ENCODE measurements at regions of chr16 and their contacts with region 1.

Region 1: GRCh38 chr16:84617791-84618580 is at the start of gene COTL1:
- DNase-seq: peak; percentile 99
- ATAC-seq: peak; percentile 88
- H3K4me3 ChIP-seq: peak within 1 kb of the TSS; percentile 57
- H3K27ac ChIP-seq: peak within 1 kb of the TSS; percentile 69
- H3K4me1 ChIP-seq: peaks cover 19 to 31% of the 10 kb centered on the region in 2 experiments; a peak in 4 of 5 replicates
- H3K27me3 ChIP-seq: no peaks in the 10 kb centered on the region
- CTCF ChIP-seq: no peak; a peak in 1 of 6 replicates
- EP300 ChIP-seq: peak; percentile 10; the same call in 1 of the 2 replicates
- POLR2A ChIP-seq: no peak
- RAD21 ChIP-seq: no peak
- polyA plus RNA-seq, gene COTL1: 27.7 to 33.4 TPM

Region 2: DNA sequence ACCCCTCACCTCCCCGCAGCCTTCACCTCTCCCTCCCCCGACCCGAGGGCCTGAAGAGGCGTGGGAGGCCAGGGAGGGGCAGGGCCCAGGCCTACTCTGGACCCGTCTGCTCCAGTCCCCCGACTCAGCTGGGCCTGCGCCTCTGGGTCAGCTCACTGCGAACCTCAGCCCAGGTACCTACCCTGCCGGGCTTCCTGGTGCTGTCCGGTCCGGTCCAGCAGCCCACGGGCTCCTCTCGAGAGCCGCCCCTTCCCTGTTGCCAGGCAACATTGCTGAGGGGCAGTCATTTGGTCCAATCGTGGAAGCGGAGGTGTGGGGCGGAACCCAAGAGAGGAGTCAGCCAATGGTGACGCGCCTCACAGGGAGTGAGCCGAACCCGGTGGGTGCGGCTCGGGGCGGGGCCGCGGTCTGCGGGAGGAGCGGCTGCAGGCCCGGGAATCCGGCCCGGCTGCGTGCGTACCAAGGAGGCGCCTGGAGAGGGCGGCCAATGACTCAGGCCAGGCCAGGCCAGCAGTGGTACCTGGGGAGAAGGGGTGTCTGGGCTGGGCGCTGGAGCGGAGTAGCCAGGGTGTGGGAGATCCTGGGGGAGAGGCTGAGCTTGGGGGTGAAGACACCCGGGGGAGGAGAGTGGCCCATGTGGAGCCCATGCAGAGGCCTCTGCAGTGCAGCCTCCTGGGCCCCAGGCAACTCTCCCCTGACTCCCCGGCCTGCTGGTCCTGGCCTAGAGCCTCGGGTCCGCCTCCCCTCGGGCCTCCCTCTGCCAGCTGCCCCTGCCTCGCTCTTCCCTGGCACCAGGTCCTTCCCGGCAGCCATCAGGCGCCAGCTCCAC is 113.4 kb before region 1 on chr16 and contains the start of gene MEAK7:
- CTCF ChIA-PET with region 1: interaction called, 120 read pairs
- POLR2A ChIA-PET with region 1: interaction called, 4 read pairs
- in situ Hi-C with region 1: no loop called
- intact Hi-C with region 1: no loop called
- DNase-seq: peak; percentile 100
- ATAC-seq: peak; percentile 99
- H3K4me3 ChIP-seq: peak within 1 kb of the TSS; percentile 61
- H3K27ac ChIP-seq: peak within 1 kb of the TSS; percentile 63
- H3K4me1 ChIP-seq: peaks cover 15 to 37% of the 10 kb centered on the region in 2 experiments
- H3K27me3 ChIP-seq: peaks cover 0 to 5% of the 10 kb centered on the region in 2 experiments; a peak in 1 of 5 replicates
- CTCF ChIP-seq: peak; percentile 9 to 44 (median 37); a peak in 4 of 6 replicates
- EP300 ChIP-seq: no peak
- POLR2A ChIP-seq: peak; percentile 90
- RAD21 ChIP-seq: no peak
- polyA plus RNA-seq, gene MEAK7: 1.4 to 1.8 TPM

Region 3: DNA sequence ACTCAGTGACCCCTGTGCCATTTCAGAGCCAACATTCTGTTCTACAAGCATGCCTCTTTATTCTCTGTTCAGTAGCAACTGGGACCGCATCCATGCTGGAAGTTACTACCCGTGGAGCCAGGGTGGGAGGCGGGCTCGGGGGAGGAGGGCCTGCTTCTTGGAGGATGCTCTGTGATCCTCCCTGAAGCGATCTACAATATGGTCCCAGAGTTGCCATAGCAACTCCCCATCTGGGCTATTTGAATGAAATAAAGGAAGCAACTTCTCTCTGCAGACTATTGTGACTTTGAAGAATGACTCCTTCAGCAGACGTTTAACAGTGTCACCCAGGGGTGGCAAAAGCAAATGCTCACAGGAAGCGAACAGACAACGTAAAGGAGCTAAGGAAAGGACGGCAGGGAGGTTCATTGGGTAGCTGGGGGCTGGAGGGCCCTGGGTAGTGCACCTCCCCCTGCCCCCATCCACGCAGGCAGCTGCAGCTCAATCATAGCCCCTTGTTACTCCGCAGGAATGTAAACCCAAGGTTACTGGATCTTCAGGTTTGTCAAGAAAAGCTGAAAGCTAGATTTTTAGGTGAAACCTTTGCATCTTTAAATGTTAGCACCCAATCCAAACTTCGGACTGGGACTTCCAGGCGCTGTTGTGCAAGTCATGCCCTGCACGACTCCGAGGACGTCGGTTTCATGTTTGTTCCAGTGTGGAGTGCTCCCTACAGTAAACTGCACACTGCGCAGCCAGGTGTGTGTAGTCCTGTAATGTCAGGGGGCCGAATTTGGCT is 62.4 kb before region 1 on chr16:
- CTCF ChIA-PET with region 1: no interaction called
- POLR2A ChIA-PET with region 1: no interaction called
- in situ Hi-C with region 1: no loop called
- intact Hi-C with region 1: loop called (anchors 5 kb)
- DNase-seq: no peak
- ATAC-seq: peak; percentile 22; the same call in 1 of the 3 replicates
- H3K4me3 ChIP-seq: no peak overlapping the region
- H3K27ac ChIP-seq: no peak overlapping the region
- H3K4me1 ChIP-seq: peaks cover 0 to 4% of the 10 kb centered on the region in 2 experiments; a peak in 3 of 5 replicates
- H3K27me3 ChIP-seq: peaks cover 28 to 36% of the 10 kb centered on the region in 2 experiments
- CTCF ChIP-seq: 0 out of 6 replicates have a peak, but pooled peaks of 2 of the 3 experiments have one; percentile 3 to 11
- EP300 ChIP-seq: no peak
- POLR2A ChIP-seq: no peak
- RAD21 ChIP-seq: no peak

Region 4: DNA sequence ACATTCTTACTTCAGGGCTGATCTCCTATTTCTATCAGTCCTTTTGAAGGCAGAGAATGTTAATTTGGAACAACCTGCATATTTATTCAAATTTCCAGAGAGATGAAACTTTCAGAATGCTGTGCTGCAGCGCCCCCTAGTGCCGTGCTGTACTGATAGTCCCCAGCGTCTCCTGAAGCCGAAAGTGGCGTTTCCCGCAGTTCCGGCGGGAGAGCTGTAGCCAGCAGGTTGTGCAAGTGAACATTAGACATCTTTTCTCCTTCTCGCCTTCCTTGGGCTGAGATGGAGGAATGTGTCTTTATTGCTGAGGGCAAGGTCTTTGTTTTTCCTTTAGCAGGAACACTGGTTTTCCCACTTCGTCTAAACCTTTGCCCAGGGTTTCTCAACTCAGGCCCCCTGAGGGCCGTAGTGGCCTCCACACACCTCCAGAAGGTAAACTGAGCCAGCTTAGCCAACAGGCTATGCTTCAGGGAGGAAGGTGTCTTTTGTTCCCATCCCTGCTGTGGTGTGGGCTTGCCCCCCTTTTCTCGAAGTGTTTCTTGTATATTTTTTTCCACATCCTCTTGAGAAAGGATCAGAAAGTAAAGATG is 108.2 kb after region 1 on chr16:
- CTCF ChIA-PET with region 1: interaction called, 58 read pairs
- POLR2A ChIA-PET with region 1: interaction called, 4 read pairs
- in situ Hi-C with region 1: loop called (anchors 5 kb)
- intact Hi-C with region 1: loop called (anchors 1 kb)
- DNase-seq: peak; percentile 67 to 94 (median 72)
- ATAC-seq: peak; percentile 80
- H3K4me3 ChIP-seq: no peak overlapping the region
- H3K27ac ChIP-seq: no peak overlapping the region; the same call in 2 of the 3 replicates
- H3K4me1 ChIP-seq: peaks cover 15 to 56% of the 10 kb centered on the region in 2 experiments
- H3K27me3 ChIP-seq: no peaks in the 10 kb centered on the region
- CTCF ChIP-seq: peak; percentile 94 to 99 (median 98)
- EP300 ChIP-seq: 0 out of 2 replicates have a peak, but pooled peaks have one; percentile 5
- POLR2A ChIP-seq: no peak
- RAD21 ChIP-seq: peak in 1 of 2 experiments; percentile 92; a peak in 2 of 4 replicates

Region 5: GRCh38 chr16:84970447-84971127 is 352.6 kb after region 1 on chr16:
- CTCF ChIA-PET with region 1: interaction called, 24 read pairs
- POLR2A ChIA-PET with region 1: interaction called, 3 read pairs
- in situ Hi-C with region 1: loop called (anchors 5 kb)
- intact Hi-C with region 1: loop called (anchors 5 kb)
- DNase-seq: peak; percentile 83 to 93 (median 85)
- ATAC-seq: peak; percentile 86
- H3K4me3 ChIP-seq: no peak overlapping the region
- H3K27ac ChIP-seq: no peak overlapping the region
- H3K4me1 ChIP-seq: peaks cover 13 to 51% of the 10 kb centered on the region in 2 experiments; a peak in 4 of 5 replicates
- H3K27me3 ChIP-seq: peaks cover 0 to 19% of the 10 kb centered on the region in 2 experiments; a peak in 3 of 5 replicates
- CTCF ChIP-seq: peak; percentile 96 to 98 (median 97)
- EP300 ChIP-seq: no peak
- POLR2A ChIP-seq: no peak
- RAD21 ChIP-seq: peak; percentile 98 to 99